Activated T-helper 1 cell treated with anti-CD3 and anti-CD28 coated beads, Interleukin-12 subunit alpha, Interleukin-12 subunit beta, Interleukin-2, Interleukin-4 antibody, amounts not matched to agents 30 ng/mL and 10 ng/mL and 1 ng/mL, durations not matched to agents 14 hours and 24 hours and 36 hours (primary cell): ENCODE measurements at regions of chr5 and their contacts with region 1.

Region 1: GRCh38 chr5:90783460-90784333 is 225.1 kb downstream of the ADGRV1 start:
- DNase-seq: peak; percentile 33
- H3K4me3 Mint-ChIP-seq: no peak overlapping the region
- H3K27ac Mint-ChIP-seq: no peak overlapping the region
- H3K4me1 Mint-ChIP-seq: no peaks in the 10 kb centered on the region
- H3K27me3 Mint-ChIP-seq: peaks cover 7% of the 10 kb centered on the region

Region 2: DNA sequence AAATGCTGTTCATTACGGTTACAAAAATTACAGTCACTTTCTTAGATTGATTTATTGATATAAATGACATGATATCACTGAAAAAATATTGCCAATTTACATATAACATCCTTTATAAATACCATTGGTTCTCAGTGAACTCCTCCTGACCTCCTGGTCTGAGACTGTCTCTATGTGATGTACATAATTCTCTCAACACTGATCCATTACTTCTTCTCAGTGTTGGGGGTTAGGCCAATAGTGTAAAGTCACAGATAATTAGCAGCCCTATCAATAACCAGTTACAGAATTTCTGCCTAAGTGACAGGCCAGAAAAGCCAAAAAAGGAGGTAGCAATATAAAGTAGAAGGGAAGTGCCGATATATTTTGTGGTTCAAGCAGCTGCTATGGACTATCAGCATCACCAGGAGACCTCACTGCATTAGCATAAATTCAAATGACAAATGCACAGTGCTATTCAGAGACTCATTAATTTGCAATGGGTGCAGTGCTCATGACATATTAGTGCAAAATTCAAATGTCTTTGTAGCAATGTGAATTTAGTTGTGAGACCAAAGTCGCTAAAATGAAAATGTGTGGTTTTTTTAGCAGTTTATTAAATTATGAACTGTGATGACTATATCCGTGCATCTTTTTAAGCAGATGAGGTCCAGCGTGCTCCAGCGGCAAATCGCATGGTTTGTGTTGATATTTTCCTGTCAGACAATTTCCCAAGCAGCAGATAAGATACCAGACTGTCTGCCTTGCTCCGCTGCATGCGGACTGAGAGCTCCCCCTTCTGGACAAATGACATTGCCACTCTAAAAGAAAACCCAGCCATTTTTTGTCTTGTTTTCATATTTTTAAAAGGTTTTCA is 518.8 kb before region 1 on chr5:
- intact Hi-C with region 1: loop called (anchors 10 kb)
- DNase-seq: peak; percentile 6
- H3K4me3 Mint-ChIP-seq: no peak overlapping the region
- H3K27ac Mint-ChIP-seq: no peak overlapping the region
- H3K4me1 Mint-ChIP-seq: no peaks in the 10 kb centered on the region
- H3K27me3 Mint-ChIP-seq: peaks cover 2% of the 10 kb centered on the region

Region 3: GRCh38 chr5:90386099-90386710 is 397.5 kb before region 1 on chr5:
- intact Hi-C with region 1: loop called (anchors 5 kb)
- DNase-seq: no peak
- H3K4me3 Mint-ChIP-seq: no peak overlapping the region
- H3K27ac Mint-ChIP-seq: no peak overlapping the region
- H3K4me1 Mint-ChIP-seq: no peaks in the 10 kb centered on the region
- H3K27me3 Mint-ChIP-seq: no peaks in the 10 kb centered on the region

Region 4: DNA sequence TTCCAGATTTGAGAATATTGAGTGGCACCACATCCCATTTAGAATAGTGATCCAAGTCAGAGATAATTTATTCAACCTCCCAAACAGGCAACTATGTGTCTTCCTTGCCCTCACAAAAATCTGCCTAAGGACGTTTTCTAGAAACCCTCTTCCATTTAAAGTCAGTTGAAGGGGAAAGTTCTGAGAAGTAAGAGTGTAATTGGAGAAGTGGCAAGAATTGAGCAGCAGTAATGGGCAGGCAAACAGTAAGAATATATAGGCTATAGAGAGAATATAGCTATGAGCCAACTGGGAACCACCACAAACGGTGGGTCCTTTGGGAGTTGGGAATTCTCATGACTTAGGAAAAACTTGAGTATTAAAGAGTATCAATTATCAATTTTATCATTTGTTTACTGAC is 343.1 kb before region 1 on chr5:
- intact Hi-C with region 1: loop called (anchors 1 kb)
- DNase-seq: no peak
- H3K4me3 Mint-ChIP-seq: peak overlapping the region; percentile 80
- H3K27ac Mint-ChIP-seq: no peak overlapping the region
- H3K4me1 Mint-ChIP-seq: peaks cover 10% of the 10 kb centered on the region
- H3K27me3 Mint-ChIP-seq: peaks cover 13% of the 10 kb centered on the region

Region 5: DNA sequence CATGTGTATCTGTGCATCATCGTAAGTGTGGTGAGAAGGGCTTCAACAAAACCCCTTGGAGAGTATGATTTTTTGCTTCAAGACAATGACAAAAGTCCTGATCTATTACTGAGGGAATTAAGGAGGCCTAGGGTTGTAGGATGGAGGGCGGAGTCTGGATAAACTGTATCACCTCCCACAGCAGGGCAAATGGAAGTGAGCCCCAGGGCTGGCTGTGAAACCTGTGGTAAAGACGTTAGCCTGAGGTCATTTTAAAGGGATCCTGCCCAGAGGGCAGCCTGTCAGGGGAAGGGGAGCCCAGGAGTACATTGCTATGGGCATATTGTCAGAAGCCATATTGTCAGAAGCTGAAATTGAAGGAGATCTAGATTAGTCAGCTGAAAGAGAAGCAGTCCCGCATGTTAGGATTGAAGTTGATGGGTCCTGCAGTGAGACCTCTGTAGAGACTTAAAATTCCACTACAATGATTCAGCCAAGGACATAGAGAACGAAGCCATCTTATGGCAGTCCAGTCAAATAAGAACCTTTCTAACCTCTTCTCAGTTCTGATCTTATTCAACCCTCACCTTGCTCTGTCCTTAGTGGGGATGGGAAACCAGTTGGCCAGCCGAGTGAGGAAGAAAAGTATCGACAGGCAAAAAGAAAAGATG is 198.2 kb before region 1 on chr5:
- intact Hi-C with region 1: no loop called
- DNase-seq: no peak
- H3K4me3 Mint-ChIP-seq: no peak overlapping the region
- H3K27ac Mint-ChIP-seq: no peak overlapping the region
- H3K4me1 Mint-ChIP-seq: no peaks in the 10 kb centered on the region
- H3K27me3 Mint-ChIP-seq: no peaks in the 10 kb centered on the region

Region 6: DNA sequence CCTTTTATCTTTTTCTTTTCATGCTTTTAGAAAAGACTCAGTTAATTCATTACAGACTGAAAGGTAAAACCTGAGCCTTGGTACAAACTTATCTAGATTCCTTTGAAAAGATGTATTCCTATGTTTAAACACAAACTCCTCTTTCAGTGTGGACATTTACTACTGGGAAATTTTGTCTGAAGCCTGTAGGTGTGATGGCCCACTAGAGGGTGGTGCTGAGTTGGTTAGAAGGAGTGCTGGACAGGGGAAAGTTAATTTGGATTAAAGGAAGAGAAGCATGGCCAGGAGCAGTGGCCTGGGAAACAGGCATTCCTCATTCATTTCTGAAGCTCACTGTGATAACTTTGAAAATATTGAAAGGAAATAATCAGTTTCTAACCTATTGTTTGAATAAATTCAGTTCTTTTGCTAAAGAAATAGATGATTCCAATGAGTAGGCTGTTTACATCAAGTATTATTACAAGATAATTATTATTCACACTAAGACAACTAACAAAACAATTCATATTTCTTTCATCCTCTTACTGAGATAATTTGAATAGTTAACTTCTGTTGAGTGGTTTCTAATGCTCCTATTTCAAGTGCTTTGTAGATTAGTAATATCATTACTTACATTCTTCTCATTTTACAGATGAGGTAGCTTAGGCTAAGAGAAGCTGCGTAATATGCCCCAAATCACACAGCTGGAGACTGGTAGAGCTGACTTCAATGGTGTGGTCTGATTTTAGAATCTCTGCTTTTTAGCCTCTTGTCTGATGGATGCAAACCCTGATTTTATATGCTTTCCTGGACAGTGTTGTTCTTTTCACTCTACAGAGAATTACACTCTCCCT is 74.2 kb before region 1 on chr5:
- intact Hi-C with region 1: loop called (anchors 2 kb)
- DNase-seq: no peak
- H3K4me3 Mint-ChIP-seq: no peak overlapping the region
- H3K27ac Mint-ChIP-seq: no peak overlapping the region
- H3K4me1 Mint-ChIP-seq: no peaks in the 10 kb centered on the region
- H3K27me3 Mint-ChIP-seq: no peaks in the 10 kb centered on the region